Activated CD8-positive, alpha-beta T cell treated with anti-CD3 and anti-CD28 coated beads for 36 hours (primary cell): ENCODE measurements at regions of chr3 and their contacts with region 1.

Region 1: DNA sequence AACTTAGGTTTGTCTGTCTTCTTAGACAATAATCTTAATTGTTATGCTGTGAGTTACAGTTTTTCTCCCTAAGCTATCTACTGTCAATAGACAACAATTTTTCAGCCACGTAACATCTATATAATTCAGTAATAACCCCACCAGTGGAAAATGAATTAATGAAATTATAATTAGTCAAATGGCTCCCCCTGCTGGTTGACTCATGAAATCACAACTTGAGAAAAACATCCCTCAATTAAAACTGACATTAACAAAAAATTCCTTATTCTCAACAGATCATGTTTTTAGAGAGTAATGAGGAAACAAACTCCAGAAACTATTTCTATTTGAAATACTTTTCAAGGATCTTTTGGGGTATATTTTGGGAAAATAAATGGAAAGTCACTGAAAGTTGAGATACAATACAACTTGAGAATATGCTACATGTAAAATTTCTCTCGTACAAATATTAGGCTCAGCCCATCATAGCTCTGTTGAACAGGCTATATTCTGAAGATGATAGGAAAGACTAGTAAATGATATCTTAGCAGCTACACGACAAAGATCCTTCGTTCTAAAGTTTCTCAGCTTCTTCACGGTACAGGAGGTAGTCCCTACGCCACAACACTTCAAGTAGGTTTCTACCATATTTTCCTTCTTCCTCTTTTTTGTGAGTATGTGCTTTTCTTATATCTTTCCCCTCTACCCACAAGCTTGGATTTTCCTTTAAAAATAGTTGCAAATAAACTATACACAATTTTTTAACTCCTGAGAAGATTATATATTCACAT is 20.7 kb downstream of the PPP1R2 start:
- DNase-seq: no peak
- ATAC-seq: no peak
- H3K4me3 Mint-ChIP-seq: no peak overlapping the region
- H3K27ac Mint-ChIP-seq: peak overlapping the region; percentile 40
- H3K4me1 Mint-ChIP-seq: peaks cover 39% of the 10 kb centered on the region
- H3K27me3 Mint-ChIP-seq: no peaks in the 10 kb centered on the region
- CTCF ChIP-seq: peak; percentile 93

Region 2: GRCh38 chr3:195407531-195408409 is 114.7 kb before region 1 on chr3:
- CTCF ChIA-PET with region 1: interaction called, 12 read pairs
- POLR2A ChIA-PET with region 1: no interaction called
- intact Hi-C with region 1: no loop called
- DNase-seq: no peak
- ATAC-seq: peak; percentile 67
- H3K4me3 Mint-ChIP-seq: peak overlapping the region; percentile 54
- H3K27ac Mint-ChIP-seq: peak overlapping the region; percentile 71
- H3K4me1 Mint-ChIP-seq: peaks cover 58% of the 10 kb centered on the region
- H3K27me3 Mint-ChIP-seq: no peaks in the 10 kb centered on the region
- CTCF ChIP-seq: no peak

Region 3: DNA sequence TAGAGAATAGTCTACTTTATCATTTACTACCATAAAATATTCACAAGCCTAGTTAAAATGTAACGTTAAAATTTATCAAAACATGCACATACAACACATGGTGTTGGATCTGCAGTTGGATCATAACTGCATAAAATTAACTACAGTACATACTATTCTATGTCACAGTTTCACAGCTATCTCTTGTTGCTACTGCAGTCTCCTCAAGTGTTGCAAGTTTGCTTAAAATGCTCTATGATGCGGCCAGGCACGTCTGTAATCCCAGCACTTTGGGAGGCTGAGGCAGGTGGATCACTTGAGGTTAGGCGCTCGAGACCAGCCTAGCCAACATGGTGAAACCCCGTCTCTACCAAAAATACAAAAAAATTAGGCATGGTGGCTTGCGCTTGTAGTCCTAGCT is 10.4 kb after region 1 on chr3:
- CTCF ChIA-PET with region 1: interaction called, 12 read pairs
- POLR2A ChIA-PET with region 1: no interaction called
- intact Hi-C with region 1: no loop called
- DNase-seq: no peak
- ATAC-seq: no peak
- H3K4me3 Mint-ChIP-seq: no peak overlapping the region
- H3K27ac Mint-ChIP-seq: peak overlapping the region; percentile 22
- H3K4me1 Mint-ChIP-seq: peaks cover 80% of the 10 kb centered on the region
- H3K27me3 Mint-ChIP-seq: no peaks in the 10 kb centered on the region
- CTCF ChIP-seq: no peak

Region 4: GRCh38 chr3:195542698-195543499 is 20.5 kb after region 1 on chr3 and contains the start of gene PPP1R2:
- CTCF ChIA-PET with region 1: interaction called, 18 read pairs
- POLR2A ChIA-PET with region 1: interaction called, 8 read pairs
- intact Hi-C with region 1: no loop called
- DNase-seq: peak; percentile 94
- ATAC-seq: peak; percentile 87
- H3K4me3 Mint-ChIP-seq: peak within 1 kb of the TSS; percentile 83
- H3K27ac Mint-ChIP-seq: peak within 1 kb of the TSS; percentile 89
- H3K4me1 Mint-ChIP-seq: peaks cover 57% of the 10 kb centered on the region
- H3K27me3 Mint-ChIP-seq: no peaks in the 10 kb centered on the region
- CTCF ChIP-seq: no peak
- total RNA-seq, gene PPP1R2: 86.7 to 89.0 TPM